Ovary (tissue), 10 donors: ENCODE measurements at regions of chr18 and their contacts with region 1.

Region 1: GRCh38 chr18:50649821-50650220 is 89.9 kb downstream of the MAPK4 start:
- DNase-seq: peak; percentile 72 to 88 (median 78)
- H3K4me3 ChIP-seq: no peak overlapping the region
- H3K27ac ChIP-seq: peak overlapping the region in 1 of 2 donors; percentile 57
- H3K4me1 ChIP-seq: peaks cover 5% of the 10 kb centered on the region
- H3K27me3 ChIP-seq: no peaks in the 10 kb centered on the region
- CTCF ChIP-seq: no peak
- EP300 ChIP-seq: no peak
- POLR2A ChIP-seq: no peak

Region 2: DNA sequence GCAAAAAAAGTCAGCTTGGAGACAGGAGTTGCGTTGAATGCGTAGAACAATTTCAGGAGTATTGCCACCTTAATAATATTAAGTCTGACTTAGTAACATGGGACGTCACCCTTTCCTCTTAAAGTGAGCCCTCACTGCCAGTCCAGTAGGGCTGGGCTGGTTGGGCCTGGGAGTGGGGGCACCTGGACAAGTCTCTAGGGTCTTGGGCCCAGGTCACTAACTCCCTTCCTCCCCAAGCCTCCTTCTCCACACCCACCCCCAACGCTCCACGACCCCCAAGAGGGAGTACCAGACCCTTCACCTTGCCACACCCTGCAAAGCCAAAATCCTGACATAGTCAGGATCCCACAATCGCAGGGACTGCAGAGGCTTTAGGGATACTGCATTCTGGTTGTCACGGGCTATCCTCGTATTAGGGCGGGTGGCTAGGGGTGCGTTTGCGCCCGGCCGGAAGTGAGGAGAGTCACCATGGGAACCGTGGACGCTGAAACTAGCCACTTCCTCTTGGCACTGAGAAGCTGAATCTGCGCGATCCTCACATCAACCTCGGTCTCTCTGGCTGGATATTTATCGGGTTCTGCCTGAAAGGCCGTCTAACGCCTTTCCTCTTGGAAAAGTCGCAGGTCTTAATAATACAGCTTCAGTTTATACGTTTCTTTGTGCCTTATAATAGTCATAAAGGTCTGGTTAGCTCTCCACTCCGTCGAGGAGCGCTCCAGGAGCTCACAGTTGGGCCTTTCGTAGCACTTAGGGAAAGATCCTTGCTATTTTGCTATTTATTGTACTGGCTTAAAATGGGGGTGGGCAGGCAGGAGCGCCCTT is 352.0 kb before region 1 on chr18:
- intact Hi-C with region 1: no loop called
- DNase-seq: peak; percentile 61 to 79 (median 73)
- H3K4me3 ChIP-seq: peak overlapping the region; percentile 33
- H3K27ac ChIP-seq: no peak overlapping the region
- H3K4me1 ChIP-seq: peaks cover 4% of the 10 kb centered on the region
- H3K27me3 ChIP-seq: no peaks in the 10 kb centered on the region
- CTCF ChIP-seq: no peak
- EP300 ChIP-seq: no peak
- POLR2A ChIP-seq: no peak

Region 3: GRCh38 chr18:52009958-52010357 is 1360.1 kb after region 1 on chr18:
- intact Hi-C with region 1: loop called in 1 of 4 experiments (anchors 5 kb)
- DNase-seq: no peak
- H3K4me3 ChIP-seq: no peak overlapping the region
- H3K27ac ChIP-seq: no peak overlapping the region
- H3K4me1 ChIP-seq: no peaks in the 10 kb centered on the region
- H3K27me3 ChIP-seq: no peaks in the 10 kb centered on the region
- CTCF ChIP-seq: no peak
- EP300 ChIP-seq: no peak
- POLR2A ChIP-seq: no peak

Region 4: GRCh38 chr18:52160652-52161051 is 1510.8 kb after region 1 on chr18:
- intact Hi-C with region 1: no loop called
- DNase-seq: no peak
- H3K4me3 ChIP-seq: no peak overlapping the region
- H3K27ac ChIP-seq: no peak overlapping the region
- H3K4me1 ChIP-seq: no peaks in the 10 kb centered on the region
- H3K27me3 ChIP-seq: no peaks in the 10 kb centered on the region
- CTCF ChIP-seq: no peak
- EP300 ChIP-seq: no peak
- POLR2A ChIP-seq: no peak